ENCODE measurements at regions of chr12 and their contacts with region 1.

Region 1: GRCh38 chr12:106919910-106920544 is 35.7 kb upstream of the TMEM263 start:
- DNase-seq: no peak
- ATAC-seq: peak; percentile 31
- H3K4me3 Mint-ChIP-seq: no peak overlapping the region
- H3K27ac Mint-ChIP-seq: no peak overlapping the region
- H3K4me1 Mint-ChIP-seq: no peaks in the 10 kb centered on the region
- H3K27me3 Mint-ChIP-seq: peaks cover 66% of the 10 kb centered on the region
- CTCF ChIP-seq: peak; percentile 58

Region 2: DNA sequence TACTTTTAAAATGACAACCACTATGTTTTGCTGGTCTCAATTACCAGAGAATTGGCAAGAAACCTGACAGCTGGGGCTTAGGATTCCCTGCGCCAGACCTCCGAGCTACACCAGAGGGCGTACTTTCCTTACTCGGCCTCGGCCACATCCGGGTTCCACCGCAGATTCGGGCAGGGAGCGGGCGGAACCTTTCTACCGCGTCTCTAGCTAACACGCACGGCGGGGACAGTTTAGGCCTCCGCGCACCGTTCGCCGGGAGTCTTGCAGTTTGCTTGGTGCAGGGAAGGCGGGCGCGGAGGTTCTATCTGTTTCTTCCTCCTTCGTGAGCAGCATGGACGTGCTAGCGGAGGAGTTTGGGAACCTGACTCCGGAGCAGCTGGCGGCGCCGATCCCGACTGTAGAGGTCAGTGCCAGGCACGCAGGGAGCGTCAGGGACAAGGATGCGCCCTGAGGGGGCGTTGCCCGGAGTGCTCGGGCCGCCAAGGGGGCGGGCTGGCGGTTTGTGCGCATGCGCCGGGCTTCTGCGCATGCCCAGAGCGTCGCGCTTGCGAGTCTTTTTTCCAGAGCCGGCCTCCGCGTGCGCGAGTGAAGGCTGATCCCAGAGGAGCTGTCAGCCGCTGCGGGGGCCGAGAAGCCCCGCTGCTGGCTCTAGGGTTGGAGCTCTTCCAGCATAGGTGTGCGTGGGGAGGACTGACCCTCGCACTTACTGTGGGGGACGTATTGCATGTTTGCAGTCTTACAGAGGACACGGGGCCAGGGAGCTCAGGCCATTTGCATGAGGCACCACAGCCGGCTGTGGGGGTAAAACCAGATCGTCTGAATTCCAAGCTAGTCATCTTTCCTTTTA is 562.3 kb before region 1 on chr12 and contains the start of gene POLR3B:
- CTCF ChIA-PET with region 1: interaction called, 23 read pairs
- POLR2A ChIA-PET with region 1: interaction called, 3 read pairs
- intact Hi-C with region 1: loop called (anchors 1 kb)
- DNase-seq: peak; percentile 96
- ATAC-seq: peak; percentile 92
- H3K4me3 Mint-ChIP-seq: peak within 1 kb of the TSS; percentile 95
- H3K27ac Mint-ChIP-seq: peak within 1 kb of the TSS; percentile 92
- H3K4me1 Mint-ChIP-seq: peaks cover 16% of the 10 kb centered on the region
- H3K27me3 Mint-ChIP-seq: no peaks in the 10 kb centered on the region
- CTCF ChIP-seq: peak; percentile 49
- total RNA-seq, gene POLR3B: 7.3 and 8.0 TPM in 2 replicates

Region 3: DNA sequence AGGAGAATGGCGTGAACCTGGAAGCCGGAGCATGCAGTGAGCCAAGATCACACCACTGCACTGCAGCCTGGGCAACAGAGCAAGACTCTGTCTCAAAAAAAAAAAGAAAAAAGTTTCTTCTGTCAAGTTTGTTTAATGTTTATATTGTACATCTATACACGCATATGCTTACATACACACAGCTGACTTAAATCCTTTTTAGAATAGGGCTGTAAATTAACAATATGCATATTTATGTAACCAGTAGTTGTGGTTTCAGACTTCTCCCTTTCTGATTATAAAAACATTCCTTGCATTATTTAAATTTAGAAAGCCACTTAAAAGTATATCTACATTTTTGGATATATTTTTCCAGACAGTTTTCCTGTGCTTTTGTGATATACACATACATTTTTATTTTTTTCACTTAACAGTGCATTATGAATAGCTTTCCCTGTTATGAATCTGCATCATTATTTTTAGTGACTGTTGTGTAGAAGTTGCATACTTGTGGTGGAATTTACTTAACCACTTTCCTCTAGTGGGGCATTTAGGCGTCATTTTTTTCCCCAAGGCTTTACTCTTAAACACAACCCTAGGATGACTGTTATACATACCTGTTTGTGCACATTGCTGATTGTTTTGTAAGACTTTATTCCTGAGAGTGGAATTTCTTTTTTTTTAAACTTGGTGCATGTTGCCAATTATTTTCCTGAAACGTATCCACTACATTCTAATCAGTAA is 533.1 kb before region 1 on chr12:
- CTCF ChIA-PET with region 1: interaction called, 22 read pairs
- POLR2A ChIA-PET with region 1: no interaction called
- intact Hi-C with region 1: loop called (anchors 1 kb)
- DNase-seq: no peak
- ATAC-seq: no peak
- H3K4me3 Mint-ChIP-seq: no peak overlapping the region
- H3K27ac Mint-ChIP-seq: no peak overlapping the region
- H3K4me1 Mint-ChIP-seq: no peaks in the 10 kb centered on the region
- H3K27me3 Mint-ChIP-seq: peaks cover 4% of the 10 kb centered on the region
- CTCF ChIP-seq: no peak

Region 4: GRCh38 chr12:106581543-106582248 is 338.3 kb before region 1 on chr12:
- CTCF ChIA-PET with region 1: no interaction called
- POLR2A ChIA-PET with region 1: no interaction called
- intact Hi-C with region 1: loop called (anchors 10 kb)
- DNase-seq: no peak
- ATAC-seq: no peak
- H3K4me3 Mint-ChIP-seq: no peak overlapping the region
- H3K27ac Mint-ChIP-seq: no peak overlapping the region
- H3K4me1 Mint-ChIP-seq: peaks cover 17% of the 10 kb centered on the region
- H3K27me3 Mint-ChIP-seq: peaks cover 75% of the 10 kb centered on the region
- CTCF ChIP-seq: no peak

Region 5: DNA sequence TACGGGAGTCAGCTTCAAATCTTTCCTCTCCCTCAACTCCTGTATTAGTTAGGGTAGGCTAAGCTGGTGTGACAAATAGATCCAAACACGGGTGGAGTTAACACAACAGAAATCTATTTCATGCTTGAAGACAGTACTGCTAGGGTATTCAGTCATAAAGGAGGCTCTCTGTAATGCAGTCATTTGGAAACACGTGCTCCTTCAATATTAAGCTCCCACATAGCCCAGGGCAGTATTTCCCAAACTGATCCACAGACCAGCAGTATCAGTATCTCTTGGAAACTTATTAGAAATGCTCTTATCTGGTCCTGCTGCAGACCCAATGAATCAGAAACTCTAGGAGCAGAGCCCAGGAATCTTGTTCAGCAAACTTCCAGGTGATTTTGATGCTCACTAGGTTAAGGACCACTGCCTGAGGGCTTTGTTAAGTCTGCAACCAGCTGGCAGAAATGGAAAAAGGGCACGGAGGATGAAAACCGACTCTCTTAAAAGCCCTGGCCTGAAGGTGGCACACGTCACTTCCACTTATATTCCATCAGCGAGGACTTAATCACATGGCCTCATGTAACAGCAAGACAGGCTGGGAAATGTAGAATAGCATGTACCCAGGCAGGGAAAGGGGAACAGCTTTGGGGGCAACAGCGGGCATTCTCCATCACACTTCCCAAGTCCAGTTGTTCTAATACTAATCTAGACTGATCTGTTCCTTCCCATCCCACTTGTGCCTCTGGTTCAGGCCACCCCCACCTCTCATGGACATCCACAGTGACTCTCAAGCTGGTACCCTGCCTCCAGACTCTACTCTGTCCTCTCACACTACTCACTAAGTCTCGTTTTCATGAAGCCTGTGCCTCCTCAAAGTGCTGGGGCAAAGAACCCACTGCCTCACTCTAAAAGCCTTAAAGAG is 183.7 kb before region 1 on chr12:
- CTCF ChIA-PET with region 1: no interaction called
- POLR2A ChIA-PET with region 1: no interaction called
- intact Hi-C with region 1: loop called (anchors 10 kb)
- DNase-seq: no peak
- ATAC-seq: no peak
- H3K4me3 Mint-ChIP-seq: no peak overlapping the region
- H3K27ac Mint-ChIP-seq: no peak overlapping the region
- H3K4me1 Mint-ChIP-seq: no peaks in the 10 kb centered on the region
- H3K27me3 Mint-ChIP-seq: peaks cover 45% of the 10 kb centered on the region
- CTCF ChIP-seq: no peak

Region 6: GRCh38 chr12:106841510-106842302 is 78.3 kb before region 1 on chr12:
- CTCF ChIA-PET with region 1: interaction called, 5 read pairs
- POLR2A ChIA-PET with region 1: no interaction called
- intact Hi-C with region 1: loop called (anchors 1 kb)
- DNase-seq: no peak
- ATAC-seq: no peak
- H3K4me3 Mint-ChIP-seq: no peak overlapping the region
- H3K27ac Mint-ChIP-seq: no peak overlapping the region
- H3K4me1 Mint-ChIP-seq: no peaks in the 10 kb centered on the region
- H3K27me3 Mint-ChIP-seq: no peaks in the 10 kb centered on the region
- CTCF ChIP-seq: no peak

Region 7: GRCh38 chr12:106986625-106987430 is 66.8 kb after region 1 on chr12 and contains the start of gene MTERF2:
- CTCF ChIA-PET with region 1: no interaction called
- POLR2A ChIA-PET with region 1: no interaction called
- intact Hi-C with region 1: loop called (anchors 1 kb)
- DNase-seq: peak; percentile 61
- ATAC-seq: peak; percentile 99
- H3K4me3 Mint-ChIP-seq: peak within 1 kb of the TSS; percentile 95
- H3K27ac Mint-ChIP-seq: peak within 1 kb of the TSS; percentile 70
- H3K4me1 Mint-ChIP-seq: peaks cover 39% of the 10 kb centered on the region
- H3K27me3 Mint-ChIP-seq: no peaks in the 10 kb centered on the region
- CTCF ChIP-seq: no peak
- total RNA-seq, gene MTERF2: 8.3 and 9.4 TPM in 2 replicates

Region 8: GRCh38 chr12:107660235-107660634 is 740.2 kb after region 1 on chr12:
- CTCF ChIA-PET with region 1: no interaction called
- POLR2A ChIA-PET with region 1: no interaction called
- intact Hi-C with region 1: no loop called
- DNase-seq: no peak
- ATAC-seq: no peak
- H3K4me3 Mint-ChIP-seq: no peak overlapping the region
- H3K27ac Mint-ChIP-seq: no peak overlapping the region
- H3K4me1 Mint-ChIP-seq: no peaks in the 10 kb centered on the region
- H3K27me3 Mint-ChIP-seq: peaks cover 9% of the 10 kb centered on the region
- CTCF ChIP-seq: no peak

Measured in activated B cell treated with CpG ODN at 0.5 μM for 24 hours (primary cell).